ENCODE measurements at regions of chr19 and their contacts with region 1.

Region 1: GRCh38 chr19:17052439-17053210 is 22.6 kb downstream of the HAUS8 start:
- DNase-seq: peak in 3 of 5 donors; percentile 54 to 71 (median 63)
- H3K4me3 ChIP-seq: no peak overlapping the region
- H3K27ac ChIP-seq: no peak overlapping the region
- H3K4me1 ChIP-seq: no peaks in the 10 kb centered on the region
- H3K27me3 ChIP-seq: no peaks in the 10 kb centered on the region
- CTCF ChIP-seq: peak; percentile 52

Region 2: GRCh38 chr19:16771618-16772017 is 281.0 kb before region 1 on chr19:
- intact Hi-C with region 1: loop called (anchors 5 kb)
- DNase-seq: peak; percentile 79 to 90 (median 84)
- H3K4me3 ChIP-seq: no peak overlapping the region
- H3K27ac ChIP-seq: no peak overlapping the region
- H3K4me1 ChIP-seq: no peaks in the 10 kb centered on the region
- H3K27me3 ChIP-seq: no peaks in the 10 kb centered on the region
- CTCF ChIP-seq: peak; percentile 82

Region 3: GRCh38 chr19:17149393-17150135 is 96.9 kb after region 1 on chr19:
- intact Hi-C with region 1: no loop called
- DNase-seq: peak in 2 of 5 donors; percentile 37 to 55
- H3K4me3 ChIP-seq: no peak overlapping the region
- H3K27ac ChIP-seq: no peak overlapping the region
- H3K4me1 ChIP-seq: no peaks in the 10 kb centered on the region
- H3K27me3 ChIP-seq: no peaks in the 10 kb centered on the region
- CTCF ChIP-seq: no peak